Naive thymus-derived CD4-positive, alpha-beta T cell (primary cell): ENCODE measurements at regions of chr1 and their contacts with region 1.

Region 1: DNA sequence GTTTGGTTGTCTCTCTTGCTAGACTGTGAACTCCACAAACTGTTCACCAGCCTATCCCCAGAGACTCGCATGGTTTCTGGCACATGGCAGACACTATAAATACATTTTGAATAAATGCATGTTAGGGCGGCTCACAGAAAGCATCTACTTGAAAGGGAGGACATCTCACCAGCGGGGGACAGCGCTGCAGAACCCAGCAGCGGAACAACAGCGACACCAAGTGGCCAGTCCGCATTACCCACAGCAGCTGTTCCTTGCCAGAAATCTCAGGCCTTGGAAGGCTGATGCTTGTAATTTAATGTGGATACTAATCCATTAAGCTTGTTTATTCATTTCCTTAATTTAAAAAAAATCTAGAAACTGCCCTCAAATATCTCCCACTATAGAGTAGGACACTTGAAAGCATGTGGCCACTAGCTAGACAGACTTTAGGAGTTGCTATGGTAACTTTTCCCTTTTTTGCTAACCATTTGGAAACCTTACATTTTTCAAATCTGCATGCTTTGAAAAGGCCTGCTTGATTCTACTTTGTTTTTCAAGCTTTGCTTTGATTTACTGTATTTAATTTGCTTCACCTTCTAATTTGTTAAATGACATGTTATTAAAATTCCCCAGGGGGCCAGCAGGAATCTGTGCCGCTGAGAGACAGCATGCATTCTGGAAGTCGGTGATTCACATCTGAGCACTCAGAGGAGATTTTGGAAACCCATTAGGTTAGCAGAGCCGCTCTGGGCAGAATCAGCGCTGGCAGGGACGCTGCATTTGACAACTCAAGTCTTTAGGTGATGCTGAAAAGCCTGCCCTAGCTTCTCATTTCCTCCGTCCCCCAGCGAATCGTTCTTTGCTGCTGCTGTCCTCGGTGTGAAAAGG is 63.5 kb upstream of the SSX2IP start:
- DNase-seq: peak; percentile 47 to 77 (median 67)
- ATAC-seq: peak; percentile 93
- H3K4me3 ChIP-seq: no peak overlapping the region
- H3K4me3 Mint-ChIP-seq: no peak overlapping the region
- H3K27ac ChIP-seq: no peak overlapping the region
- H3K27ac Mint-ChIP-seq: peak overlapping the region in 1 of 9 donors; percentile 29
- H3K4me1 ChIP-seq: no peaks in the 10 kb centered on the region
- H3K4me1 Mint-ChIP-seq: peaks cover 0 to 7% (median 3%) of the 10 kb centered on the region in 7 donors
- H3K27me3 ChIP-seq: no peaks in the 10 kb centered on the region
- H3K27me3 Mint-ChIP-seq: peaks cover 9 to 26% (median 18%) of the 10 kb centered on the region in 5 donors

Region 2: GRCh38 chr1:83905315-83905907 is 848.3 kb before region 1 on chr1:
- CTCF ChIA-PET with region 1: interaction called, 4 read pairs
- POLR2A ChIA-PET with region 1: no interaction called
- intact Hi-C with region 1: loop called (anchors 1 kb)
- DNase-seq: peak in 5 of 9 donors; percentile 16 to 34 (median 25)
- ATAC-seq: peak; percentile 53
- H3K4me3 ChIP-seq: no peak overlapping the region
- H3K4me3 Mint-ChIP-seq: no peak overlapping the region
- H3K27ac ChIP-seq: no peak overlapping the region
- H3K27ac Mint-ChIP-seq: no peak overlapping the region
- H3K4me1 ChIP-seq: no peaks in the 10 kb centered on the region
- H3K4me1 Mint-ChIP-seq: no peaks in the 10 kb centered on the region
- H3K27me3 ChIP-seq: no peaks in the 10 kb centered on the region
- H3K27me3 Mint-ChIP-seq: peaks cover 9 to 23% (median 20%) of the 10 kb centered on the region in 5 donors

Region 3: DNA sequence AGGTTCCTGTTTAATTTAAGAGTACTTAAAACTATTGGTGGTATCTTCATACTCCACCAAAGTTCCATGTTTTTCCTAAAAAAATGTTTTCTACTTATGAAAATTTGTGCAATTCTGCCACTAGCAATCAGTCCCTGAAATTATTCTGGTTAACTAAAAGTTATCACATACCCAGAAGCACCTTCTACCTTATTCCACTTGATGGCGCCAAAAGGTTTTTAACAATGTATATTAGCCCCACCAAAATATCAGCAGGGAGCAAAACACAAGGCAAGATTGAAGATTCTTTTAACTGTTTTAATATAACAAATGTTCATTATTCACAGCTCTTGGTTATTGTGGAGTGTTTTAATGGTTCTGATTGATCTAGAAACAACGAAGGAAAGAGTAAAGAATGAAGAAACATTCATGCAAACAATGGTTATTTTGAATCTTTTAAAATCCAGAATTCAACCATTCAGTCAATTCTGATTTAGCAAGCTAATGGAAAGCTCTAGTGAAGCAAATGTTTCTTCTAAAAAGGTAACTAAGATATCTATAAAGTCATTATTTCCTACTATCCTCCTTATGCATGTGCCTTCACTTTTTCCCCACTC is 822.0 kb before region 1 on chr1:
- CTCF ChIA-PET with region 1: interaction called, 5 read pairs
- POLR2A ChIA-PET with region 1: no interaction called
- intact Hi-C with region 1: loop called (anchors 1 kb)
- DNase-seq: peak in 7 of 9 donors; percentile 18 to 60 (median 45)
- ATAC-seq: peak; percentile 79
- H3K4me3 ChIP-seq: no peak overlapping the region
- H3K4me3 Mint-ChIP-seq: no peak overlapping the region
- H3K27ac ChIP-seq: no peak overlapping the region
- H3K27ac Mint-ChIP-seq: no peak overlapping the region
- H3K4me1 ChIP-seq: no peaks in the 10 kb centered on the region
- H3K4me1 Mint-ChIP-seq: no peaks in the 10 kb centered on the region
- H3K27me3 ChIP-seq: no peaks in the 10 kb centered on the region
- H3K27me3 Mint-ChIP-seq: peaks cover 4 to 19% (median 7%) of the 10 kb centered on the region in 5 donors

Region 4: GRCh38 chr1:84298328-84298683 is 455.4 kb before region 1 on chr1:
- CTCF ChIA-PET with region 1: no interaction called
- POLR2A ChIA-PET with region 1: no interaction called
- intact Hi-C with region 1: loop called in 1 of 2 experiments (anchors 10 kb)
- DNase-seq: peak; percentile 40 to 65 (median 46)
- ATAC-seq: peak; percentile 88
- H3K4me3 ChIP-seq: peak overlapping the region; percentile 92
- H3K4me3 Mint-ChIP-seq: peak overlapping the region; percentile 83 to 95 (median 90)
- H3K27ac ChIP-seq: peak overlapping the region; percentile 69
- H3K27ac Mint-ChIP-seq: peak overlapping the region; percentile 67 to 85 (median 79)
- H3K4me1 ChIP-seq: peaks cover 4 to 25% of the 10 kb centered on the region in 2 donors
- H3K4me1 Mint-ChIP-seq: peaks cover 17 to 52% (median 42%) of the 10 kb centered on the region in 7 donors
- H3K27me3 ChIP-seq: no peaks in the 10 kb centered on the region
- H3K27me3 Mint-ChIP-seq: peaks cover 0 to 16% (median 6%) of the 10 kb centered on the region in 5 donors

Region 5: DNA sequence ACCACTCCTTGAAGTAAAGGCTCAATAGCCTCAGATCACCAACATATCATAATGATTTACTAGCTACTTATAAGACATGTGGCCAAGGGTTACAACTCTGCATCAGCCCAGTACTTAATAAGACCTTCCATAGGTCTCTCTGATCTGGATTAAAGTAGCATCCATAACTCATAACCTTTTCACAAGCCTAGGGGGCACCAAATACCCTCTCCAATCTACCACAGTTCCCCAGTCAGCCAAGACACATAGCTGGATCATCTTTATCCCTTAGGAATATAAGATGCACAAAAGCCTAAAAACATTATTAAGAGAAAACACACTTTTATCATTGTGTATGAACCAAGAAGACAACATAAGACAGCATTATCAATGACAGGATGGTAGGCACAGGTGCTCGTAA is 85.6 kb before region 1 on chr1:
- CTCF ChIA-PET with region 1: interaction called, 10 read pairs
- POLR2A ChIA-PET with region 1: no interaction called
- intact Hi-C with region 1: loop called (anchors 1 to 10 kb)
- DNase-seq: peak in 2 of 9 donors; percentile 11 to 24
- ATAC-seq: peak; percentile 51
- H3K4me3 ChIP-seq: no peak overlapping the region
- H3K4me3 Mint-ChIP-seq: no peak overlapping the region
- H3K27ac ChIP-seq: no peak overlapping the region
- H3K27ac Mint-ChIP-seq: peak overlapping the region in 1 of 9 donors; percentile 34
- H3K4me1 ChIP-seq: peaks cover 0 to 2% of the 10 kb centered on the region in 2 donors
- H3K4me1 Mint-ChIP-seq: peaks cover 0 to 14% (median 10%) of the 10 kb centered on the region in 7 donors
- H3K27me3 ChIP-seq: no peaks in the 10 kb centered on the region
- H3K27me3 Mint-ChIP-seq: no peaks in the 10 kb centered on the region